ENCODE measurements at regions of chr12 and their contacts with region 1.

Region 1: DNA sequence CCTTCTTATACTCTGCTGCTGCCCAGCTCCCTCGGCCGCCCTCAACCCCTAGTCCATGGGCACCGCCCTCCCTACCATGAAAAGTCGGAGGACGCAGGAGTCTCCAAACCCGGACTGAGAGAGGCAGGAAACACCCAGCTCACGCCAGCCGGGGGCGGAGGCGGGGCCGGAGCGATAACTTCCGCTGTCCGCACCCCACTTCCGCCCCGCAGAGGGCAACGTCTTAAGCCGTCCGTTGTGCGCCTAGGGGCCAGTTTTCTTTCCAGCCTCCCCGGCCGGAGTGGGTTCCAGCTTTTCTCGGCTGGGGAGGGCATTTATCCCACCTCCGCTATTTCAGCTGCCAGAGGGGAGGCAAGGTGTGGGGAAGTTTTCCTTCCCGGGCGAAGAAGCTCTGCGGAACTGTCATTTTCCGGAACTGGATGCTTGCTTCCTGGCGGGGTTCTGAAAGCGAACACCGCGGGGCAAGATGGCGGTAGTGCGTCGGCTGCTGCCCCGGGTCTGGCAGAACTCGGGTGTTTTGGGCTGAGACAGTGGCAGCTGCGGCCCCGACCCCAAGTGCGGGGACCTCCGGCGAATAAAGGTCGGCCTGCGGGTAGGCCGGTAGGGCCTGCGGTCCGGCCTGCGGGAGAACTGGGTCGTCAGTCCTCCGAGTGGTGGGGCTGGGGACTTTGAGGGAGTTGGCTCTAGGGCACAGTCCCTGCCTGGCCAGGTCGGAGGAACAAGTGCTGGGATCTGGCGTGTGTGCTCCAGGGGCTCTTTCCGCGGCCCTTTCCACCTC is at the starts of genes KCTD10 and UBE3B:
- DNase-seq: peak; percentile 74 to 93 (median 82)
- ATAC-seq: peak; percentile 91
- H3K4me3 ChIP-seq: peak within 1 kb of the TSS; percentile 90
- H3K4me3 Mint-ChIP-seq: peak within 1 kb of the TSS; percentile 98
- H3K27ac ChIP-seq: peak within 1 kb of the TSS; percentile 73 to 87
- H3K27ac Mint-ChIP-seq: peak within 1 kb of the TSS; percentile 92
- H3K4me1 ChIP-seq: peaks cover 30% of the 10 kb centered on the region
- H3K4me1 Mint-ChIP-seq: peaks cover 50% of the 10 kb centered on the region
- H3K27me3 ChIP-seq: no peaks in the 10 kb centered on the region
- H3K27me3 Mint-ChIP-seq: no peaks in the 10 kb centered on the region
- CTCF ChIP-seq: no peak
- total RNA-seq, gene KCTD10: 24.2 to 26.1 TPM
- total RNA-seq, gene UBE3B: 17.2 to 19.9 TPM

Region 2: GRCh38 chr12:107760809-107761501 is 1716.4 kb before region 1 on chr12 and contains the start of gene PRDM4:
- CTCF ChIA-PET with region 1: no interaction called
- POLR2A ChIA-PET with region 1: no interaction called
- intact Hi-C with region 1: loop called in 1 of 2 experiments (anchors 10 kb)
- DNase-seq: peak; percentile 75 to 98 (median 88)
- ATAC-seq: peak; percentile 91
- H3K4me3 ChIP-seq: peak within 1 kb of the TSS; percentile 78
- H3K4me3 Mint-ChIP-seq: peak within 1 kb of the TSS; percentile 96
- H3K27ac ChIP-seq: peak within 1 kb of the TSS; percentile 51 to 77
- H3K27ac Mint-ChIP-seq: peak within 1 kb of the TSS; percentile 87
- H3K4me1 ChIP-seq: peaks cover 26% of the 10 kb centered on the region
- H3K4me1 Mint-ChIP-seq: peaks cover 48% of the 10 kb centered on the region
- H3K27me3 ChIP-seq: no peaks in the 10 kb centered on the region
- H3K27me3 Mint-ChIP-seq: no peaks in the 10 kb centered on the region
- CTCF ChIP-seq: no peak
- total RNA-seq, gene PRDM4: 40.2 to 44.0 TPM

Region 3: GRCh38 chr12:109052414-109053323 is 424.7 kb before region 1 on chr12 and contains the start of gene USP30:
- CTCF ChIA-PET with region 1: no interaction called
- POLR2A ChIA-PET with region 1: interaction called, 4 read pairs
- intact Hi-C with region 1: loop called in 1 of 2 experiments (anchors 5 kb)
- DNase-seq: peak; percentile 75 to 93 (median 81)
- ATAC-seq: peak; percentile 77
- H3K4me3 ChIP-seq: peak within 1 kb of the TSS; percentile 92
- H3K4me3 Mint-ChIP-seq: peak within 1 kb of the TSS; percentile 98
- H3K27ac ChIP-seq: peak within 1 kb of the TSS; percentile 87
- H3K27ac Mint-ChIP-seq: peak within 1 kb of the TSS; percentile 86
- H3K4me1 ChIP-seq: peaks cover 23% of the 10 kb centered on the region
- H3K4me1 Mint-ChIP-seq: peaks cover 13% of the 10 kb centered on the region
- H3K27me3 ChIP-seq: no peaks in the 10 kb centered on the region
- H3K27me3 Mint-ChIP-seq: no peaks in the 10 kb centered on the region
- CTCF ChIP-seq: no peak
- total RNA-seq, gene USP30: 21.8 to 23.0 TPM

Region 4: GRCh38 chr12:109462710-109463692 is 14.4 kb before region 1 on chr12:
- CTCF ChIA-PET with region 1: no interaction called
- POLR2A ChIA-PET with region 1: interaction called, 21 read pairs
- intact Hi-C with region 1: no loop called
- DNase-seq: peak in 1 of 14 experiments; percentile 19
- ATAC-seq: peak; percentile 73
- H3K4me3 ChIP-seq: no peak overlapping the region
- H3K4me3 Mint-ChIP-seq: peak overlapping the region; percentile 61
- H3K27ac ChIP-seq: no peak overlapping the region
- H3K27ac Mint-ChIP-seq: peak overlapping the region; percentile 76
- H3K4me1 ChIP-seq: peaks cover 30% of the 10 kb centered on the region
- H3K4me1 Mint-ChIP-seq: peaks cover 58% of the 10 kb centered on the region
- H3K27me3 ChIP-seq: no peaks in the 10 kb centered on the region
- H3K27me3 Mint-ChIP-seq: no peaks in the 10 kb centered on the region
- CTCF ChIP-seq: no peak

Region 5: GRCh38 chr12:109497675-109498074 is 20.3 kb after region 1 on chr12:
- CTCF ChIA-PET with region 1: no interaction called
- POLR2A ChIA-PET with region 1: no interaction called
- intact Hi-C with region 1: no loop called
- DNase-seq: no peak
- ATAC-seq: no peak
- H3K4me3 ChIP-seq: no peak overlapping the region
- H3K4me3 Mint-ChIP-seq: no peak overlapping the region
- H3K27ac ChIP-seq: no peak overlapping the region
- H3K27ac Mint-ChIP-seq: no peak overlapping the region
- H3K4me1 ChIP-seq: no peaks in the 10 kb centered on the region
- H3K4me1 Mint-ChIP-seq: no peaks in the 10 kb centered on the region
- H3K27me3 ChIP-seq: no peaks in the 10 kb centered on the region
- H3K27me3 Mint-ChIP-seq: no peaks in the 10 kb centered on the region
- CTCF ChIP-seq: no peak

Region 6: GRCh38 chr12:109544955-109545531 is 67.7 kb after region 1 on chr12:
- CTCF ChIA-PET with region 1: no interaction called
- POLR2A ChIA-PET with region 1: no interaction called
- intact Hi-C with region 1: no loop called
- DNase-seq: peak in 4 of 14 experiments; percentile 1 to 54 (median 8)
- ATAC-seq: no peak
- H3K4me3 ChIP-seq: no peak overlapping the region
- H3K4me3 Mint-ChIP-seq: no peak overlapping the region
- H3K27ac ChIP-seq: no peak overlapping the region
- H3K27ac Mint-ChIP-seq: no peak overlapping the region
- H3K4me1 ChIP-seq: peaks cover 15% of the 10 kb centered on the region
- H3K4me1 Mint-ChIP-seq: peaks cover 8% of the 10 kb centered on the region
- H3K27me3 ChIP-seq: peaks cover 0 to 12% of the 10 kb centered on the region in 2 experiments
- H3K27me3 Mint-ChIP-seq: peaks cover 20% of the 10 kb centered on the region
- CTCF ChIP-seq: no peak

Region 7: DNA sequence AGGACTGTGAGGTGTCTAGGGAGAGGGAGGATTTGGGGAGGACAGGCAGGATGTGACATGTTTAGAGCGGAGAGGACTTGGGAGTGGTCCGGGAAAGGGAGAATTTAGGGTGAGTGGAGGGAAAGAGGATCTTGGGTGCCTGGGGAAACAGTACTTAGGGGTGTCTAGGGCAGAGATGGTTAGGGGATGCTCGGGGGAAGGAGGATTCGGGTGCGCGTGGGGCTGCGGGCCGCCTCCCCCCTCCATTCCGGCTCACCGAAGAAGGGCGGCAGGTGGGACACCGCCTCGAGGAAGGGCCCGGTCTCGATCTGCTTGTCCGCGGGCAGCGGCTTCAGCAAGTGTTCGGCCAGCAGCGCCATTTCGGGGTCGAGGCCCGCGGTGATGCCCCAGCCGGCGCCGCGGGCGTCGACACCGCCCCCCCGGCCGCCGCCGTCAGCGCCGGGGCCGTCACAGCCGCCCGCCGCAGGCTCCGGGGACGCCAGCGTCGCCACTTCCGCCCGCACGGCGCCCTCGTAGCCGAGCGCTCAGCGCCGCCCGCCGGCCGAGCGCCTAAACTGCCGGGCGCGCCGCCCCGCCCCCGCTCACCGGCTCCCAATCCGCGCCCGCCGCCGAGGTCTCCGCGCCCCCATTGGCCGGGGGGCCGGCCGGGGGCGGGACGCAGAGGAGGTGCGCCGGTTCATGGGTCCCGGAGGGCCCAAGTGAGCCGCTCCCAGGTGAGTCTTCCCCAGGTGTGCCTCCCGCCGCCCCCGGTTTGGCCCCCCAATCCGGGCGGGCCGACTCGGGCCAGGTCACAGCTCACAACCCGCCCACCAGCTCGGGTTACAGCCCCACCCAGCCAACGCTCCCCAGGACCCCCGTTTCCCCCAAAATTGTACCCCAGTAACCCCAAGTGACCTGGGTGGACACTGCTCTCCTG is 402.9 kb after region 1 on chr12 and contains the start of gene GLTP:
- CTCF ChIA-PET with region 1: no interaction called
- POLR2A ChIA-PET with region 1: no interaction called
- intact Hi-C with region 1: loop called in 1 of 2 experiments (anchors 10 kb)
- DNase-seq: peak; percentile 78 to 97 (median 88)
- ATAC-seq: peak; percentile 96
- H3K4me3 ChIP-seq: peak within 1 kb of the TSS; percentile 98
- H3K4me3 Mint-ChIP-seq: peak within 1 kb of the TSS; percentile 92
- H3K27ac ChIP-seq: peak within 1 kb of the TSS; percentile 81 to 85
- H3K27ac Mint-ChIP-seq: peak within 1 kb of the TSS; percentile 87
- H3K4me1 ChIP-seq: peaks cover 35% of the 10 kb centered on the region
- H3K4me1 Mint-ChIP-seq: peaks cover 54% of the 10 kb centered on the region
- H3K27me3 ChIP-seq: no peaks in the 10 kb centered on the region
- H3K27me3 Mint-ChIP-seq: no peaks in the 10 kb centered on the region
- CTCF ChIP-seq: no peak
- total RNA-seq, gene GLTP: 24.8 to 25.2 TPM

Region 8: DNA sequence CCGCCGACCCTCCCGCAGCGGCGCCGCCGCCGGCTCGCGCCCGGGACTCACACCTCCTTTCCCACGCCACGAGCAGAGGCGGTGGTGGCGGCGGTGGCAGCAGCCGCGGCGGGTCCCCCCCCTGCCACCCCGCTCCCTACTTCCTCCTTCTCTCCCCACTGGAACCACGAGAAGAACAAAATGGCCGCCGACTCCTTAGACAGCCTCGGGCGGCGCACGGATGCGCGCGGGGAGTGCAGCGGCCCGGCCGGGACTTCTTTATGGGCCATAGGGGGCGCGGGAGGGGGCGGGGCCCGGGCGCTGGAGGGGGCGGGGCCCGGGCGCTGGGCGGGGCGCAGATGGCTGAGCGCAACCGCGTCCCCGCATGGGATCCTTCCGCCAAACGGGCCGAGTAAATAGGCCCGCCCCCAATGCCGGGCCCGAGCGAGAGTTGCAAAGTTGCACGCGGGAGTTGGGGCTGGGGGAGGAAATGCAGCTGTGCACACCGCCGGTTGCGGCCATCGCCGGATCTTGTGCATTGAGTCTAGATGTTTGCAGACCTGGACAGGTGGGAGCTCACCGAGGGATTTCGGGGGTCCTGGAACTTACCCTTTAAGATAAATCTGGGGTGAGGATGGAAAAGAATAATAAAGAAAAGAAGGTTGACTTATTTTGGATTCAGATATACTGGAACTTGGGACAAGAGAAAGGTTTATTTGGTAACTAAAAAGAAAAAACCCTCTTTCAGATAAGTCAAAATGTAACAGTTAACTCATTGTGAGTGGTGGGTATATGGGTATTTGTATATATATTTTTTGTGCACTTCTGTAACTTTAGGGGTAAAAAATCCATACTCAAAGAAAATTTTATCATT is 1265.6 kb after region 1 on chr12 and contains the start of gene PPP1CC:
- CTCF ChIA-PET with region 1: no interaction called
- POLR2A ChIA-PET with region 1: no interaction called
- intact Hi-C with region 1: loop called in 1 of 2 experiments (anchors 5 kb)
- DNase-seq: peak; percentile 81 to 97 (median 90)
- ATAC-seq: peak; percentile 90
- H3K4me3 ChIP-seq: peak within 1 kb of the TSS; percentile 95
- H3K4me3 Mint-ChIP-seq: peak within 1 kb of the TSS; percentile 100
- H3K27ac ChIP-seq: peak within 1 kb of the TSS; percentile 50 to 71
- H3K27ac Mint-ChIP-seq: peak within 1 kb of the TSS; percentile 98
- H3K4me1 ChIP-seq: peaks cover 22% of the 10 kb centered on the region
- H3K4me1 Mint-ChIP-seq: peaks cover 57% of the 10 kb centered on the region
- H3K27me3 ChIP-seq: no peaks in the 10 kb centered on the region
- H3K27me3 Mint-ChIP-seq: no peaks in the 10 kb centered on the region
- CTCF ChIP-seq: no peak
- total RNA-seq, gene PPP1CC: 146 to 150 TPM